ENCODE measurements at regions of chr7 and their contacts with region 1.

Region 1: DNA sequence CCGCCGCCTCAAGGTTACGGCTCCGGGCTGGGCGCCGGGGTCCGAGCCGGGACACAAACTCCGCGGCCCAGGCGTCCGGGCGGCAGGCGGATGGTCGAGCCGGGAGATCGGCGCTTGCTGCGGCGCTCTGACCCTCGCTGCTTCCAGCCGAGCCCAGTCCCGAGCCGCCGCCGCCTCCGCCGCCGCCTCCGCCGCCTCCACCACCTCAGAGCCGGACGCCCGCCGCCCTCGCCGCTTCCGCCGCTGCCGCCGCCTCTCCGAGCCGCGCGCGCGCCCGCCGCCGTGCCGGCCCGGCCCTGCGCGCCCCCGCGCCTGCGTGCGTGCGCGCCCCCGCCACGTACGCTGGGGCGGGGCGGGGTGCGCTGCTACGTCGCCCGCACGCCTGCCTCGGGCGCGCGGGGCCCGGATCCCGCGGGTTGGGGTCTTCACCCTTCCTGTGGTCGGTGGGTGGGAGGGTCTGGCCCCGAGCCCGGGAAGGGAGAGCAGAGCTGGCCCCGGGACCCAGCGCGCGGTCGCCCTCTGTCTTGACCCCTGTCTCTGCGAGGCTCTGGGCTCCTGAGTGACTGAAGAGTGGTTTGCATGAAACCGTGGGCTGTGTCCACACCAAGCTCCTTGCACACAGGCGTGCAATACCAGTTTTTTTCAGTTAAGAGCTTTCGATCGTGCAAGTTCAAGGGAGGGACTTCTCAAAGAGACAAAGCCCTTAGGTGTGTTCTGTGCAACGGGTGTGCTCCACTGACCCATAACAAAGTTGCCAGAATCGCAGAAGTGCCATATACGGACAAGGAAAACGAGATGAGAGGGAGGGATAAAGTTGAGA is at the start of gene SMURF1:
- DNase-seq: peak; percentile 66
- ATAC-seq: peak; percentile 47
- H3K4me3 ChIP-seq: peak within 1 kb of the TSS; percentile 88
- H3K27ac ChIP-seq: peak within 1 kb of the TSS; percentile 65
- H3K4me1 ChIP-seq: peaks cover 51% of the 10 kb centered on the region
- H3K27me3 ChIP-seq: no peaks in the 10 kb centered on the region
- CTCF ChIP-seq: no peak
- total RNA-seq, gene SMURF1: 30.2 and 32.3 TPM in 2 replicates

Region 2: DNA sequence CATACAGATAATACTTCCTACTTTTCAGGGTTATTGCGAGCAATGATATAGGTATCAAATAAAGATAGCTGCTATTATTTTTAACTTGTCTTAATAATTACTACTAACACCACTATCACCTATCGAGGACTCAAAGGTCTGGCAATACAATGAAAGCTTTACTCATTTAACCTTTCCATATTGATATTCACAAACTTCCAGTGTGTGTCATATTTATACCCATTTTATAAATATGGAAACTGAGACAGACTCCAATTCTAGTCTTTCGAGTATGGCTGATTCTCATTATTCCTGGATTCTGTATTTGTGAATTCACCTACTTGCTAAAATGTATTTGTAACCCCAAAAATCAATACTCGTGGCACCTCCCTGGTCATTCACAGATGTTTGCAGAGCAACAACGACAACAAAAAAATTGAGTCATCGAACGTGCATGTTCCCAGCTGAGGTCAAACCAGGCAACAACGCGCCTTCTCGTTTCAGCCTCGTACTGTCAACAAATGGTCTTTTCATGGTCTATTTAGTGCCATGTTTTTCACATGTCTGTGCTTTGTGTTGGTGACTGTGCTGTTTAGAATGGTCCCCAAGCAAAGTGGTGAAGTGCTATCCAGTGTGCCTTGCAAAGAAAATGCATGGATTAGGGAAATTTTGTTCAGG is 51.9 kb before region 1 on chr7:
- CTCF ChIA-PET with region 1: no interaction called
- POLR2A ChIA-PET with region 1: interaction called, 27 read pairs
- intact Hi-C with region 1: no loop called
- DNase-seq: no peak
- ATAC-seq: no peak
- H3K4me3 ChIP-seq: no peak overlapping the region
- H3K27ac ChIP-seq: no peak overlapping the region
- H3K4me1 ChIP-seq: 0 out of 2 replicates have a peak, but pooled peaks cover 3% of the 10 kb centered on the region
- H3K27me3 ChIP-seq: no peaks in the 10 kb centered on the region
- CTCF ChIP-seq: no peak

Region 3: DNA sequence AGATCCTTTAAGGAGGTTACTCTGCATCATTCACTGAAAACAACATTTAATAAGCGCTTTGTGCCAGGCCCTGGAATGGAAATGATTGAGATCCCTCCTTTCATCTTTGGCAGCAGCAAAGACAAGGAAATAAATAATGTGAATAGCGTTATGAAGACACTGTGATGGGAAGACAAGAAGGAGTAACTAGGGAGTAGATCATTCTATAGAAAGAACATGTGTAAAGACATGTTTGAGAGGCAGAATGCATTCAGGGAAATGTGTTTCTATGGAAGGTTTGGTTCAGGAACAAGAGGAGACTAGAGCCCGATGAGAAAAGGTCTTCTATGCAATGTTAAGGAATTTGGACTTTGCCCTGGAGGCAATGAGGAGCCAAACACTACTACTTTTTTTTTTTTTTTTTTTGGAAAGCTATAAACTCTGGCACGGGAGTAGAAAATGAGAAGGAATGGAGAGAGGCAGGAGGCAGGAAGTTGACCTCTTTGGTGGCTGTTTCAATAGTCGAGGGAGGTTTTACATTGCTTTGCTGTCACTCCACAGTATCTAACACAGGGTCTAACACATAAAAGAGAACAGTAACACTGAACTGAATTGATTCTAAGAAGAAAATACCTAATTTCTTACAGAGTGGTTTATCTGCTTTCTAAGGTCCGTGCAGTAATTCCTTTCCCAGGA is 45.1 kb before region 1 on chr7:
- CTCF ChIA-PET with region 1: no interaction called
- POLR2A ChIA-PET with region 1: no interaction called
- intact Hi-C with region 1: loop called (anchors 2 kb)
- DNase-seq: peak; percentile 56
- ATAC-seq: no peak
- H3K4me3 ChIP-seq: no peak overlapping the region
- H3K27ac ChIP-seq: no peak overlapping the region
- H3K4me1 ChIP-seq: peaks cover 40% of the 10 kb centered on the region
- H3K27me3 ChIP-seq: no peaks in the 10 kb centered on the region
- CTCF ChIP-seq: no peak

Region 4: DNA sequence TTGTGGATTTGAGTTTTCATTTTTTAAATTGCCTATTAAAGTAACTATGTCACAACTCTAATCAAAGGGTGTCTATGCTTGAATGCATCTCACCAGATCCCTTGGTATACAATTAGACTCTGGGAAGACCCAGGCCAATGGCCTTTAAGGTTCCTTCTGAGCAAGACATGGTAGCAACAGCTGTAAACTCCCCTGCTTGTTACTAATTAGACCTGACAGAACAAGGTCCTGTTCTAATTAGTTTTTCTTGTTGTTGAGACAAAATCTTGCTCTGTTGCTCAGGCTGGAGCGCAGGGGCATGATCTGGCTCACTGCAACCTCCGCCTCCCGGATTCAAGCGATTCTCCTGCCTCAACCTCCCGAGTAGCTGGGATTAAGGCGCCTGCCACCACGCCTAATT is 131.4 kb after region 1 on chr7:
- CTCF ChIA-PET with region 1: no interaction called
- POLR2A ChIA-PET with region 1: no interaction called
- intact Hi-C with region 1: loop called (anchors 2 kb)
- DNase-seq: no peak
- ATAC-seq: no peak
- H3K4me3 ChIP-seq: no peak overlapping the region
- H3K27ac ChIP-seq: 0 out of 2 replicates have a peak overlapping the region, but pooled peaks have one; percentile 98
- H3K4me1 ChIP-seq: peaks cover 28% of the 10 kb centered on the region
- H3K27me3 ChIP-seq: no peaks in the 10 kb centered on the region
- CTCF ChIP-seq: no peak

Region 5: GRCh38 chr7:99312316-99313203 is 168.5 kb after region 1 on chr7:
- CTCF ChIA-PET with region 1: interaction called, 5 read pairs
- POLR2A ChIA-PET with region 1: no interaction called
- intact Hi-C with region 1: loop called (anchors 5 kb)
- DNase-seq: peak; percentile 86
- ATAC-seq: peak; percentile 60
- H3K4me3 ChIP-seq: no peak overlapping the region
- H3K27ac ChIP-seq: no peak overlapping the region
- H3K4me1 ChIP-seq: peaks cover 22% of the 10 kb centered on the region; the same call in 1 of the 2 replicates
- H3K27me3 ChIP-seq: no peaks in the 10 kb centered on the region
- CTCF ChIP-seq: peak; percentile 92

Region 6: DNA sequence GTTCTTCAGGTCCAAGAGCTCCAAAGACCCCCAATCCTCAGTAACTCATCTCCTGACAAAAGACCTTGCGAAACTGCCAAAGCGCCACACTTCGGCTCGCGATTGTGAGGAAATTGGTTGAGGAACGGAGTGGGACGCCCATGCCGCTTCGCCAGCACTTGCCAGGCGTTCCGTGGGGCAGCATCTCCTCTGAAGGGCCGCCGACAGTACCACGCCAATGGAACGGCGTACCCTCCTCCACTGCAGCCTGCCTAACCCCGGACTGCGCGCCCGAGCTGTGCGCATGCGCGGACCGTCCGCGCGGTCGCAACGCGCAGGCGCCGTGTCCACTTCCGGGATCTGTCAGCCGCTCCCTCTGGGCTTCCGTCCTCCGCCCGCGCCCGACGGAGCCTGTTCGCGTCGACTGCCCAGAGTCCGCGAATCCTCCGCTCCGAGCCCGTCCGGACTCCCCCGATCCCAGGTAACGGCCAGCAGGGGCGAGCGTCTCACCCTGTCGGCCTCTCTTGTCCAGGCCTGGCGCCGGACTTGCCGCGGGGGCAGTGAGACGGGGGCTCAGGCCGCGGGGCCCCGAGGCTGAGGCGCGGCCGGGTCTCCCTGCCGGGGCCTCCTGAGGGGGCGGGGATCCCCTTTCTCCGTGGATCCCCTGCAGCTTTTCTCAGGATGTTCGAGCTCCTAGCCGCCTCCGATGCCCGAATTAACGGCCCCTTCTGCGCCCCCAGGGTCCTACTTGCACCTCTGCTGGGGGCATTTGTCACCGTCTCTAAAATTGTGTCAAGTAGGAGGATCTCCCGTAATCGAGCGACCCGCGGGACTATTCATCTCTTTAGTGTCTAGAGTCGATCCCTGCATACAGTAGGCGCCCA is 181.7 kb after region 1 on chr7 and contains the start of gene ARPC1A:
- CTCF ChIA-PET with region 1: no interaction called
- POLR2A ChIA-PET with region 1: no interaction called
- intact Hi-C with region 1: loop called (anchors 5 kb)
- DNase-seq: peak; percentile 94
- ATAC-seq: peak; percentile 78
- H3K4me3 ChIP-seq: peak within 1 kb of the TSS; percentile 72
- H3K27ac ChIP-seq: peak within 1 kb of the TSS; percentile 65
- H3K4me1 ChIP-seq: peaks cover 35% of the 10 kb centered on the region
- H3K27me3 ChIP-seq: no peaks in the 10 kb centered on the region
- CTCF ChIP-seq: no peak
- total RNA-seq, gene ARPC1A: 183 and 193 TPM in 2 replicates

Measured in PC-3 (cell line).